ENCODE measurements at regions of chr12 and their contacts with region 1.

Region 1: DNA sequence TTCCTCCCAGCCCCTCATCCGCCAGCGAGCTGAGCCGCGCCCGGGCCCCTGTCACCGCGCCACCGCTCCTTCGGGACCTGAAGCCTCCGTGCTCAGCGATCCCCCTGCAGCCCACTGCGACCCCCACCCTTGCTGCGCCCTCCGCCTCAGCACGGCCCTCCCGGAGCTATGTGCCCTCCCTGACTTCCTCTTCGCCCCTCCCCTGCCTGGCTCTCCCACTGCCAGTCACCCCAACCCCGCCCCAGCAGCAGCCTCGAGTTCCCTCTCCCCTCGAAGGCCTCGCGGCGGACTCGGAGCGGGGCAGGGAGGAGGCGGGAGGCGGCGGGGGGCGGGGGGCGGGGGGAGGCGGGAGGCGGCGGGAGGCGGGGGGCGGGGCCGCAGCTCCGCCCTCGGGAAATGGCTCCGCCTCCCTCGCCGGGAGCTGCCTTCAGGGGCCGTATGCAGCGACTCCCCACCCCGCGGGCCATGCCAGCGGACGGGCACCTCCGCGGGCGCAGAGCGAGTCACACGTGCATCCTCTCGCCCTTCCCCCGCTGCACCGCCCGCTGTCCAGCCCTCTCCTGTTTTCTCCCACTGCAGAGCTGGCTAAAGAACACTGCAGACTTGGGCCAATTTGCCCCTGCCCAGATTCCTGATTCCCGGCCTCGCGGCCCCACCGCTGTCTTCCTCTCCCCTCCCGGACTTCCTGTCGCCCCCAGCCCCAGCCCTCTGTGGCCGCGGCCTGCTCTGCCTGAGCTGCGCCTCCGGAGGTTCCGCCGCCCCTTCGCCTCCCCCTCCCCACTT is 29.1 kb upstream of the ADIPOR2 start:
- DNase-seq: peak; percentile 86
- H3K4me3 Mint-ChIP-seq: peak overlapping the region; percentile 81
- H3K27ac Mint-ChIP-seq: peak overlapping the region; percentile 78
- H3K4me1 Mint-ChIP-seq: peaks cover 30% of the 10 kb centered on the region
- H3K27me3 Mint-ChIP-seq: peaks cover 1% of the 10 kb centered on the region

Region 2: DNA sequence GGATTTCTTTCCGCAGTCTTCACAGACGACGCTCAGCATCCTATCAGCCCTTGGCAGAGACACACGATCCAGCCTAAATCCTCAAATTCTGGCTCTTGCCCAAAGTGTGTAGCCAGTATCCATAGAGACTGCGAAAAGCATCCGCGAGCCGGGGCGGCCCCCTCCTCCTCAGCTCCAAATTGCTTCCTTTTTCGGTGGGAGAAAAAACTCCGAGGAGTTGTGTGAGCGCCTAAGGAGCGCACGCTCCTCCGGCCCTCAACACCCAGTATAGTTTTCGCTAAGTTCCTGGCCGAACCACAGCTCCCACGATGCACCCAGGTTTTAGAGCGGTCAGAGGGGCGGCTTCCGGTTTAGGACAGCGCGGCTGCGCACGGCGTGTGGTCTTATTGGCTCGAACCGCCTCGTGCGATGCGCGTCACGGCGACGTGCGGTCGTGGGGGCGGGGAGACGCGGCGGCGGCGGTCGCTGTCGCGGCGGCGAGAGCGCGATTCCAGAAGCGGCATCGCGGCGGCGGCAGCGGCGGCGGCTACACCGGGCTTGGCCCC is 28.9 kb after region 1 on chr12 and contains the start of gene ADIPOR2:
- intact Hi-C with region 1: loop called (anchors 1 kb)
- DNase-seq: peak; percentile 94
- H3K4me3 Mint-ChIP-seq: peak within 1 kb of the TSS; percentile 100
- H3K27ac Mint-ChIP-seq: peak within 1 kb of the TSS; percentile 99
- H3K4me1 Mint-ChIP-seq: peaks cover 36% of the 10 kb centered on the region
- H3K27me3 Mint-ChIP-seq: peaks cover 14% of the 10 kb centered on the region
- total RNA-seq, gene ADIPOR2: 69.2 and 81.0 TPM in 2 replicates

Region 3: GRCh38 chr12:2004113-2004929 is 342.6 kb after region 1 on chr12 and contains the start of gene DCP1B:
- intact Hi-C with region 1: loop called (anchors 2 kb)
- DNase-seq: peak; percentile 93
- H3K4me3 Mint-ChIP-seq: peak within 1 kb of the TSS; percentile 97
- H3K27ac Mint-ChIP-seq: peak within 1 kb of the TSS; percentile 96
- H3K4me1 Mint-ChIP-seq: peaks cover 16% of the 10 kb centered on the region
- H3K27me3 Mint-ChIP-seq: peaks cover 6% of the 10 kb centered on the region
- total RNA-seq, gene DCP1B: 9.2 and 10.2 TPM in 2 replicates